ENCODE measurements at regions of chrX and their contacts with region 1.

Region 1: GRCh38 chrX:65706041-65706828 is 38.8 kb downstream of the MSN start:
- DNase-seq: peak in 1 of 2 donors; percentile 9
- ATAC-seq: peak; percentile 45 to 51
- H3K4me3 ChIP-seq: no peak overlapping the region
- H3K27ac ChIP-seq: peak overlapping the region; percentile 59 to 70 (median 64)
- H3K4me1 ChIP-seq: peaks cover 29 to 35% of the 10 kb centered on the region in 2 donors
- H3K27me3 ChIP-seq: no peaks in the 10 kb centered on the region
- CTCF ChIP-seq: no peak
- POLR2A ChIP-seq: no peak

Region 2: GRCh38 chrX:65601530-65602220 is 104.6 kb before region 1 on chrX:
- in situ Hi-C with region 1: loop called in 2 of 4 experiments (anchors 10 to 25 kb)
- intact Hi-C with region 1: loop called (anchors 5 kb)
- DNase-seq: peak; percentile 50 to 62
- ATAC-seq: peak; percentile 89 to 91
- H3K4me3 ChIP-seq: no peak overlapping the region
- H3K27ac ChIP-seq: peak overlapping the region; percentile 71 to 84 (median 79)
- H3K4me1 ChIP-seq: peaks cover 6 to 14% of the 10 kb centered on the region in 2 donors
- H3K27me3 ChIP-seq: no peaks in the 10 kb centered on the region
- CTCF ChIP-seq: peak in 3 of 5 experiments; percentile 8 to 30 (median 21)
- POLR2A ChIP-seq: peak; percentile 12 to 41

Region 3: DNA sequence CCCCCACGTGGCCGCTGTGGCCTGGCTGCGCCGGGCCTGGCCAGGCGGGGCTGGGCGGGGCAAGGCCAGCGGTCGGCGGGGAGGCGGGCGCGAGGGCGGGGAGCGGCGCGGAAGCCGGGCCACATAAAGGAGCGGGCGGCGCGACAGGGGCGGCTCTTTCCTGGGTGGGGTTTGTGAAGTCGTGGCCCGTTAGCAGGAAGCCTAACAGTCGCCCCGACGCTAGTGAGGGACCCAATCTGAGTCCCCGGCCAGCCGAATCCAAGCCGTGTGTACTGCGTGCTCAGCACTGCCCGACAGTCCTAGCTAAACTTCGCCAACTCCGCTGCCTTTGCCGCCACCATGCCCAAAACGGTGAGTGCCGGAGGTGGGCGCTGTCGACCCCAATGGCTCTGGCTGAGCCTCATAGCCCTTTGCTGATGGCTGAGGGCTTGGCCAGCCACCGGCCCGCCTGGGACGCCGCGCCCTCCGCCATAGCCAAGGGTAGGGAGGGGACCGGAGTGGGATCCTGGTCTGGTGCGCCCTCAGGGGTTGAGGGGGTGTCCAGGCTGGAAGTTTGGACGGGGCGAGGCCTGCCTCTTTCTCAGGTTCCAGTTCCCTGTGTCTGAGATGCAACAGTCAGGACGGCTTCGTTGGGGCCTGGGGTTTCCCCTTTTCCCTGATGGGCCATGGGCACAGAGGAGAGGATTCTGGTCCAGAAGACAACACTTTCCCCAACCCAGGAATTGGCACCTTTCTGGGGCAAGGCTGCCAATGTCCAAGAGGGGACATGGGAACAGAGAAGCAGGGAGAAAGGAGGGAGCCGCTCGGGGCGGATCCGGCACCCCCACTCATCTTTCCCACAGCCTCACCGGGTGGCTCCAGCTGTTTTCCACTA is 38.5 kb before region 1 on chrX and contains the start of gene MSN:
- in situ Hi-C with region 1: no loop called
- intact Hi-C with region 1: no loop called
- DNase-seq: peak; percentile 60 to 66
- ATAC-seq: peak; percentile 75 to 83
- H3K4me3 ChIP-seq: peak within 1 kb of the TSS; percentile 71 to 82 (median 78)
- H3K27ac ChIP-seq: peak within 1 kb of the TSS; percentile 85 to 96 (median 95)
- H3K4me1 ChIP-seq: peaks cover 4 to 24% of the 10 kb centered on the region in 2 donors
- H3K27me3 ChIP-seq: no peaks in the 10 kb centered on the region
- CTCF ChIP-seq: peak in 1 of 5 experiments; percentile 17
- POLR2A ChIP-seq: peak; percentile 72 to 86
- total RNA-seq, gene MSN: 39.1 to 69.6 (median 59.6) TPM